Dorsolateral prefrontal cortex (tissue), 120 donors: ENCODE measurements at regions of chr9 and their contacts with region 1.

Region 1: DNA sequence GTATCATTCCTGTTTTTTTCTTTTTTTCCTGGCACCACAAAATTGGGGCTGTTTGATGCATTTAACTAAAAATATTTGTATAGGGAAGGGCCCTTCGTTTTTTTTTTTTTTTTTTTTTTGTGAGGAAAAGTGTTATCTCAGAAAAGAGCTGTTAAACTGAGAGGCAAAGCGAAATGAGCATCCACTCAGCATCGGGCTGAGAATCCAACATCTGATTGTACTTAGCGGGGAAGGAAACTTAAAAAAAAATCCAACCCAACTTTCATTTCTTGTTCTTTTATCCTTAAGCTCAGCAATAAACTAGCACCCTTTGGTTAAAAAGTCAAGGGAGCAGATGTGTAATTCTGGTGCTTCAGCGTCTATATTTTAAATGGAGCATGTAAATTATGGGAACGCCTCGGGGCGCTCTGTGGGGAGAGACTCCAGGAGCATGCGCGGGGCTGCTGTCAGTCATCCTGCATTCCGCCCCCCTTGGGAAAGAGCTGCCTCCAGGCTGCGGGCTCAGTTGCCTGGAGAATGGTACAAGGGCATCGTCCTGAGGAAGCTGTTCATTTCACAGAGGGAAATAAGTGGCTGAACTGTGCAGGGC is 33.3 kb downstream of the DMRT2 start:
- DNase-seq: peak; percentile 10 to 85 (median 76)
- H3K4me3 ChIP-seq: peak overlapping the region; percentile 14 to 69 (median 52)
- H3K27ac ChIP-seq: peak overlapping the region in 24 of 59 donors; percentile 2 to 71 (median 30)
- H3K27me3 ChIP-seq: peaks cover 0 to 13% (median 0%) of the 10 kb centered on the region in 45 donors
- CTCF ChIP-seq: peak in 39 of 56 donors; percentile 7 to 62 (median 31)

Region 2: DNA sequence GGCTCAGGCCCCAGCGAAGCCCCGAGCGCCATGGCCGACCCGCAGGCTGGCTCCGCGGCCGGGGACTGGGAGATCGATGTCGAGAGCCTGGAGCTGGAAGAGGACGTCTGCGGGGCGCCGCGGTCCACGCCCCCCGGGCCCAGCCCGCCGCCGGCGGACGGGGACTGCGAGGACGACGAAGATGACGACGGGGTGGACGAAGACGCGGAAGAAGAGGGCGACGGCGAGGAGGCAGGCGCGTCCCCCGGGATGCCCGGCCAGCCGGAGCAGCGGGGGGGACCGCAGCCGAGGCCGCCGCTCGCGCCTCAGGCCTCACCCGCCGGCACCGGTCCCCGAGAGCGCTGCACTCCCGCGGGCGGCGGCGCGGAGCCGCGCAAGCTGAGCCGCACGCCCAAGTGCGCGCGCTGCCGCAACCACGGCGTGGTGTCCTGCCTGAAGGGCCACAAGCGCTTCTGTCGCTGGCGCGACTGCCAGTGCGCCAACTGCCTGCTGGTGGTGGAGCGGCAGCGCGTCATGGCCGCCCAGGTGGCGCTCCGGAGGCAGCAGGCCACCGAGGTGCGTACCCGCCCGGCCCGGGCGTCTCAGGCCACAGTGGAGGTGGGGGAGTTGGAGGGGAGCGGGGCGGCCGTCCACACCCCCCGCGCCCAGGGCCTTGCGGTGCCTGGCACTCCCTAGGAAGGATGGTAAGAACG is 31.7 kb before region 1 on chr9:
- intact Hi-C with region 1: loop called in 1 of 2 experiments (anchors 2 kb)
- DNase-seq: peak in 9 of 10 donors; percentile 51 to 84 (median 67)
- H3K4me3 ChIP-seq: peak overlapping the region; percentile 24 to 71 (median 52)
- H3K27ac ChIP-seq: peak overlapping the region in 58 of 59 donors; percentile 11 to 95 (median 84)
- H3K27me3 ChIP-seq: peaks cover 5 to 100% (median 88%) of the 10 kb centered on the region in 45 donors
- CTCF ChIP-seq: peak in 51 of 56 donors; percentile 13 to 72 (median 42)

Region 3: DNA sequence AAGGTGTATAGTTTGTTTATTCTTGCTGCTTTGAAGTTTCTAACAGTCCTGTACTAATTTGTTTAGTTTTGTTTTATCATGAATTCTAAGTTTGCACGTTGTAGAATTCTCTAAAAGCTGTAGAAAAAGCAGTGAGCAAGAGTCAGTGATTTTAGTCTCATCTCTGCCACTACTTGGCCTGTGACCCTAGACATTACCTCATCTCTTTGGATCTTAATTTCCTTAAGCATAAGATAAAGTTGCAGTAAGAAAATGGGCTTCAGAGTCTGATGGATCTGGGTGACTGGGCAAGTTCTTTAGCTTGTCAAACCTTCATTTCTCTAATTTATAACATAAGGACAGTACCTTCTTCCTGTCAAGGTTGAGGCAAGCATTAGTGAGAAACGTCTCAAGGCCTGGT is 214.6 kb after region 1 on chr9:
- intact Hi-C with region 1: no loop called
- DNase-seq: no peak
- H3K4me3 ChIP-seq: no peak overlapping the region
- H3K27ac ChIP-seq: no peak overlapping the region
- H3K27me3 ChIP-seq: peaks cover 0 to 3% (median 0%) of the 10 kb centered on the region in 45 donors
- CTCF ChIP-seq: no peak